ENCODE measurements at regions of chr14 and their contacts with region 1.

Region 1: GRCh38 chr14:105861985-105862465 is 335.6 kb downstream of the TMEM121 start:
- DNase-seq: peak; percentile 90 to 98 (median 98)
- H3K4me3 ChIP-seq: peak overlapping the region in 6 of 7 experiments; percentile 74 to 90 (median 82)
- H3K27ac ChIP-seq: peak overlapping the region; percentile 68 to 75
- H3K4me1 ChIP-seq: peaks cover 0 to 97% (median 75%) of the 10 kb centered on the region in 4 experiments
- H3K27me3 ChIP-seq: no peaks in the 10 kb centered on the region

Region 2: GRCh38 chr14:105889701-105890473 is 27.9 kb after region 1 on chr14:
- CTCF ChIA-PET with region 1: interaction called, 3 read pairs
- POLR2A ChIA-PET with region 1: interaction called, 35 read pairs
- DNase-seq: peak; percentile 62 to 90 (median 81)
- H3K4me3 ChIP-seq: peak overlapping the region; percentile 71 to 96 (median 81)
- H3K27ac ChIP-seq: peak overlapping the region; percentile 61 to 80
- H3K4me1 ChIP-seq: peaks cover 0 to 91% (median 70%) of the 10 kb centered on the region in 4 experiments
- H3K27me3 ChIP-seq: no peaks in the 10 kb centered on the region